Colonic mucosa (tissue), 4 donors: ENCODE measurements at regions of chrX and their contacts with region 1.

Region 1: GRCh38 chrX:41824551-41824950 is 98.8 kb downstream of the CASK start:
- DNase-seq: peak; percentile 28
- H3K4me3 ChIP-seq: no peak overlapping the region
- H3K27ac ChIP-seq: no peak overlapping the region
- H3K4me1 ChIP-seq: no peaks in the 10 kb centered on the region
- H3K27me3 ChIP-seq: no peaks in the 10 kb centered on the region
- CTCF ChIP-seq: no peak

Region 2: DNA sequence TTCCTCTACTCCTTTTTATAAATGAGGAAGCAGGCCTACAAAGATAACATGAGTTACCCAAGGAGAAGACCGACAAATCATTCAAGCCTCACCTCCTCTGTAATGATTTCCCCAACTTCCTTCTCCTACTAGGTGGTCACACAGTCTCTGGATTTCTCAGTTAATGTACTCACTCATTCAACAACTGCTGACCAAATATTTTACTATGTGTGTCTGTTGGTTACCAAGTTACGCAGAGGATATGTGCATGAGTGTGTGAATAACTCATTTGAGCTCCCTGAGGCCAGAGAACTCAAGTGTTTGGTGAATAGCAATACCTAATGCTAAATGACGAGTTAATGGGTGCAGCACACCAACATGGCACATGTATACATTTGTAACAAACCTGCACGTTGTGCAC is 88.4 kb after region 1 on chrX:
- intact Hi-C with region 1: loop called (anchors 10 kb)
- DNase-seq: no peak
- H3K4me3 ChIP-seq: no peak overlapping the region
- H3K27ac ChIP-seq: no peak overlapping the region
- H3K4me1 ChIP-seq: no peaks in the 10 kb centered on the region
- H3K27me3 ChIP-seq: no peaks in the 10 kb centered on the region
- CTCF ChIP-seq: no peak